ENCODE measurements at regions of chr1 and their contacts with region 1.

Region 1: GRCh38 chr1:62508187-62508758 is 71.4 kb downstream of the USP1 start:
- DNase-seq: peak in 4 of 35 experiments; percentile 2 to 56 (median 7)
- ATAC-seq: no peak
- H3K4me3 ChIP-seq: no peak overlapping the region
- H3K4me3 Mint-ChIP-seq: no peak overlapping the region
- H3K27ac ChIP-seq: no peak overlapping the region
- H3K27ac Mint-ChIP-seq: no peak overlapping the region
- H3K4me1 ChIP-seq: no peaks in the 10 kb centered on the region
- H3K4me1 Mint-ChIP-seq: no peaks in the 10 kb centered on the region
- H3K27me3 ChIP-seq: no peaks in the 10 kb centered on the region
- H3K27me3 Mint-ChIP-seq: no peaks in the 10 kb centered on the region

Region 2: DNA sequence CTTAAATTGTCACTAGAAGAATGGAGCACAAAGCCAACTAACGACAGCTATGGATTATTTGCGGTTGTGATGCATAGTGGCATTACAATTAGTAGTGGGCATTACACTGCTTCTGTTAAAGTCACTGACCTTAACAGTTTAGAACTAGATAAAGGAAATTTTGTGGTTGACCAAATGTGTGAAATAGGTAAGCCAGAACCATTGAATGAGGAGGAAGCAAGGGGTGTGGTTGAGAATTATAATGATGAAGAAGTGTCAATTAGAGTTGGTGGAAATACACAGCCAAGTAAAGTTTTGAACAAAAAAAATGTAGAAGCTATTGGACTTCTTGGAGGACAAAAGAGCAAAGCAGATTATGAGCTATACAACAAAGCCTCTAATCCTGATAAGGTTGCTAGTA is 58.0 kb before region 1 on chr1:
- CTCF ChIA-PET with region 1: no interaction called
- POLR2A ChIA-PET with region 1: no interaction called
- DNase-seq: peak in 1 of 35 experiments; percentile 17
- ATAC-seq: no peak
- H3K4me3 ChIP-seq: no peak overlapping the region
- H3K4me3 Mint-ChIP-seq: no peak overlapping the region
- H3K27ac ChIP-seq: no peak overlapping the region
- H3K27ac Mint-ChIP-seq: peak overlapping the region; percentile 36 to 38
- H3K4me1 ChIP-seq: peaks cover 2 to 5% of the 10 kb centered on the region in 2 experiments
- H3K4me1 Mint-ChIP-seq: peaks cover 9 to 16% (median 10%) of the 10 kb centered on the region in 3 donors
- H3K27me3 ChIP-seq: no peaks in the 10 kb centered on the region
- H3K27me3 Mint-ChIP-seq: no peaks in the 10 kb centered on the region

Region 3: DNA sequence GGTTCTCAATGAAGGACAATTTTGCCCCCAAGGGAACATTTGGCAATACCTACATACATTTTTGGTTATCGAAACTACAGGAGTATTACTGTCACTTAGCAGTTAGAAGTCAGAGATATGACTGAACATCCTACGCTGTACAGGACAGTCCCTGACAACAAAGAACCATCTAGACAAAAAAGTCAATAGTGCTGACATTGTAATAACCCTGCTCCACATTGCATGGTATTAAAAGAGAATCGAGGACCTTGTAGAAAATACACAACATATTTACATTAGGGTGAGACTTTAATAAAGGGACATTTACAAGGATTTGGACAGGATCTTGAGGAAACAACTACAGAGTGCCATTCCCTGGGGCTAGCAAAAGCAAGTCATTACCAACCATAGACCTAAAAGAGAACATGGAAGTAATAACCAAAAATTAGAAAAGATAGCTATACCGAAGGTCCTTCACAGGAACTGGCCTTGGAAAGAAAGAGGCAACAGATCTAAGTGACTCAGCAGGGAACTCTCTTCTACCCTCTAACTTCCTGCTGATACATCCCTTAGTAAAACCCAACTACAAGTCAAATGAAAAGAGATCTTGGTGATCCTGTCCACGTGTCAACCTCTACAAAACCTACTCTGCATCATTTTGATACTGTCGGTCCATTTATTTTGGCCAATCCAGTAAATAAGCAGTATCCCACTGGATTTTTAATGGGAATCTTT is 129.3 kb after region 1 on chr1:
- CTCF ChIA-PET with region 1: no interaction called
- POLR2A ChIA-PET with region 1: no interaction called
- DNase-seq: no peak
- ATAC-seq: no peak
- H3K4me3 ChIP-seq: no peak overlapping the region
- H3K4me3 Mint-ChIP-seq: no peak overlapping the region
- H3K27ac ChIP-seq: no peak overlapping the region
- H3K27ac Mint-ChIP-seq: no peak overlapping the region
- H3K4me1 ChIP-seq: no peaks in the 10 kb centered on the region
- H3K4me1 Mint-ChIP-seq: no peaks in the 10 kb centered on the region
- H3K27me3 ChIP-seq: no peaks in the 10 kb centered on the region
- H3K27me3 Mint-ChIP-seq: no peaks in the 10 kb centered on the region

Region 4: GRCh38 chr1:62746085-62746808 is 238.0 kb after region 1 on chr1:
- CTCF ChIA-PET with region 1: interaction called, 19 to 27 read pairs
- POLR2A ChIA-PET with region 1: no interaction called
- DNase-seq: peak in 1 of 35 experiments; percentile 60
- ATAC-seq: no peak
- H3K4me3 ChIP-seq: no peak overlapping the region
- H3K4me3 Mint-ChIP-seq: no peak overlapping the region
- H3K27ac ChIP-seq: no peak overlapping the region
- H3K27ac Mint-ChIP-seq: no peak overlapping the region
- H3K4me1 ChIP-seq: no peaks in the 10 kb centered on the region
- H3K4me1 Mint-ChIP-seq: peaks cover 0 to 1% (median 0%) of the 10 kb centered on the region in 3 donors
- H3K27me3 ChIP-seq: no peaks in the 10 kb centered on the region
- H3K27me3 Mint-ChIP-seq: peaks cover 0 to 8% of the 10 kb centered on the region in 2 donors